G401 (cell line): ENCODE measurements at regions of chr14 and their contacts with region 1.

Region 1: GRCh38 chr14:22589096-22589839 is at the start of gene DAD1:
- DNase-seq: peak; percentile 99
- total RNA-seq, gene DAD1: 381 and 389 TPM in 2 replicates

Region 2: GRCh38 chr14:22653012-22653621 is 63.8 kb after region 1 on chr14:
- in situ Hi-C with region 1: loop called (anchors 5 kb)
- DNase-seq: peak; percentile 51

Region 3: GRCh38 chr14:22668417-22668816 is 79.1 kb after region 1 on chr14:
- in situ Hi-C with region 1: no loop called
- DNase-seq: no peak

Region 4: GRCh38 chr14:22715186-22715812 is 126.0 kb after region 1 on chr14:
- in situ Hi-C with region 1: no loop called
- DNase-seq: no peak

Region 5: GRCh38 chr14:22865424-22866405 is 276.4 kb after region 1 on chr14:
- in situ Hi-C with region 1: no loop called
- DNase-seq: no peak